ENCODE measurements at regions of chr14 and their contacts with region 1.

Region 1: DNA sequence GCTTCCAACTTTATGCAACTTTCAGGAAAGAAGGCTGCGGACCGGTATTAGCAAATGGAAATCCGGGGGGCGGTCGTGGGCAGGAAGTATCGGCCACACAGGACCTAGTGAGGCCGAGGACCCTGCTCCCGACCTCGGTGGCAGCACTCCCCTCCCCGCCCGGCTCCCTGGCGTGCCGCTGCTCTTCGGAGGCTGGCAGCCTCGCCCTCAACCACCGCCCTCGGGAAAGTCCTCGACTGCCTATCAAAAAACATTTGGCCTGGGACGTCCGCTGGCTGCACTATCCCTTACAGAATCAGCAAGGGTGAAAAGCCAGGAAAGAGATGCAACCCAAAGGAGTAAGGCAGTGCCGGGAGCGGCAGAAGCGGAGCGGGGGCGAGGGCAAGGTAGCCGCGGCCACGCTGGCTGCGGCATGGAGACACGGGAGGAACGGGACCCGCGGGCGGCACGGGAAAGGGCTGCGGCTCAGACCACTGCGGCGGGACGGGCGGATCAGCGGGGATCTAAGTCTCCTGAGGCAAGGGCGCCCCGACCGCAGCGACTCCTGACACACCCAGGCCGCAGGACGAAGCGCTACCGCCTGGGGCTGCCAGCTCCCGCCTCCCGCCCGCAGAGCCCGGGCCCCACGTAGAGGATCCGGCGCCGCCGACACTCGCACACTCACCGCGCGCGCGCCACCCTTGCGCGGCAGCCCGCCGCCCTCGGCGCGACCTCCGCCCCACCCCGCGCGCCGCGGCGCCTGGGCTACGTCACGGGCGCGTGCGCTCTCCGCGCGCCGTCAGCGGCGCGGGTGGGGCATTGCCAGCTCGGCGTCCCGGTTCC is at the starts of genes BBOF1 and ENTPD5:
- DNase-seq: peak; percentile 88 to 91 (median 91)
- H3K4me3 ChIP-seq: peak within 1 kb of the TSS; percentile 87 to 94
- H3K4me3 Mint-ChIP-seq: peak within 1 kb of the TSS; percentile 93 to 98 (median 94)
- H3K27ac ChIP-seq: peak within 1 kb of the TSS; percentile 92
- H3K27ac Mint-ChIP-seq: peak within 1 kb of the TSS; percentile 94 to 99 (median 99)
- H3K4me1 ChIP-seq: peaks cover 12% of the 10 kb centered on the region
- H3K4me1 Mint-ChIP-seq: peaks cover 6 to 22% (median 11%) of the 10 kb centered on the region in 4 donors
- H3K27me3 ChIP-seq: no peaks in the 10 kb centered on the region
- H3K27me3 Mint-ChIP-seq: no peaks in the 10 kb centered on the region
- total RNA-seq, gene BBOF1: 2.6 TPM
- total RNA-seq, gene ENTPD5: 15.0 to 16.2 TPM

Region 2: GRCh38 chr14:73886449-73887317 is 132.1 kb before region 1 on chr14 and contains the start of gene ZNF410:
- CTCF ChIA-PET with region 1: no interaction called
- POLR2A ChIA-PET with region 1: interaction called, 6 read pairs
- intact Hi-C with region 1: loop called (anchors 2 kb)
- DNase-seq: peak; percentile 84 to 90 (median 86)
- H3K4me3 ChIP-seq: peak within 1 kb of the TSS; percentile 89
- H3K4me3 Mint-ChIP-seq: peak within 1 kb of the TSS; percentile 89 to 99 (median 98)
- H3K27ac ChIP-seq: peak within 1 kb of the TSS; percentile 96
- H3K27ac Mint-ChIP-seq: peak within 1 kb of the TSS; percentile 85 to 100 (median 99)
- H3K4me1 ChIP-seq: peaks cover 43% of the 10 kb centered on the region
- H3K4me1 Mint-ChIP-seq: peaks cover 34 to 55% (median 42%) of the 10 kb centered on the region in 4 donors
- H3K27me3 ChIP-seq: no peaks in the 10 kb centered on the region
- H3K27me3 Mint-ChIP-seq: no peaks in the 10 kb centered on the region
- total RNA-seq, gene ZNF410: 46.2 to 47.3 TPM

Region 3: DNA sequence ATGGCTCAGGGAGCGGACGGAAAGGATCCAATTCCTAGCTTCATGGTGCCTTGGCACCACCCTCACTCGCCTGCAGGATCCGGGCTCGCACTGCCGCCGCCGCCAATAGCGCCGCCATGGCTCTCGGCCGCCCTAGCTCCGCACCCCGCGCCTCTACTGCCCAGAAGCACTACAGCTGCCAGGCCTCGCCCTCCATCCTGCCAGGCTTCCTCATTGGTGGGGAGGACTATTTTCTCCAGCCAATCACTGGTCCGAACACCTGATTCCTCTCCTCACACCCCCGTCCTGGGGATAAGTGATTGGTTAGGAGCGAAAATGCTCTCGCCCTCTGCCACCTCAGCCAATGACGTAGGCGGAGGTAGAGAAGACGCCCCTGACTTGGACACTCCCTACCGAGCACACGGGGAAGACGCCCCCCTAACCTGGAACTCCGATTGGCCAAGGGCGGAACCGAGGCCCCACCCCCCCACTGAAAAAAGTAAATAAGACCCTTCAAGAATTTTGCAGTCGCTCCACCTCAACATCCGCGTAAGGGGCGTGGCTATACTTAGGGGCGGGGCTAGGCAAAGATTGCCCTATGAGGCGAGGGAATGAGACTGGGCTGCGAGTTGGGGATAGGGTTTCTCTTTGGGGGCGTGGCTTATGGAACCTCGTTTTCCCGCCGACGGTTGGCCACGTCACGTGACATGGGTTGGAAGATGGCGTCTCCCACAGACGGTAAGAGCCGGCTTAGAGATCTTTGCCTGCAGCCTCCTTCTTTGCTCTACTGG is 65.7 kb after region 1 on chr14 and contains the starts of genes ALDH6A1 and LIN52:
- CTCF ChIA-PET with region 1: no interaction called
- POLR2A ChIA-PET with region 1: interaction called, 8 read pairs
- intact Hi-C with region 1: loop called (anchors 1 kb)
- DNase-seq: peak; percentile 99 to 100 (median 100)
- H3K4me3 ChIP-seq: peak within 1 kb of the TSS; percentile 68 to 86
- H3K4me3 Mint-ChIP-seq: peak within 1 kb of the TSS; percentile 95 to 99 (median 98)
- H3K27ac ChIP-seq: peak within 1 kb of the TSS; percentile 60
- H3K27ac Mint-ChIP-seq: peak within 1 kb of the TSS; percentile 90 to 99 (median 96)
- H3K4me1 ChIP-seq: peaks cover 25% of the 10 kb centered on the region
- H3K4me1 Mint-ChIP-seq: peaks cover 20 to 48% (median 33%) of the 10 kb centered on the region in 4 donors
- H3K27me3 ChIP-seq: no peaks in the 10 kb centered on the region
- H3K27me3 Mint-ChIP-seq: no peaks in the 10 kb centered on the region
- total RNA-seq, gene ALDH6A1: 21.7 to 22.5 TPM
- total RNA-seq, gene LIN52: 9.4 to 11.0 TPM